ENCODE measurements at regions of chr17 and their contacts with region 1.

Region 1: GRCh38 chr17:59431601-59432000 is 100.1 kb downstream of the YPEL2 start:
- DNase-seq: no peak
- H3K4me3 ChIP-seq: no peak overlapping the region
- H3K27ac ChIP-seq: no peak overlapping the region
- H3K4me1 ChIP-seq: peaks cover 6% of the 10 kb centered on the region
- H3K27me3 ChIP-seq: no peaks in the 10 kb centered on the region
- CTCF ChIP-seq: no peak

Region 2: DNA sequence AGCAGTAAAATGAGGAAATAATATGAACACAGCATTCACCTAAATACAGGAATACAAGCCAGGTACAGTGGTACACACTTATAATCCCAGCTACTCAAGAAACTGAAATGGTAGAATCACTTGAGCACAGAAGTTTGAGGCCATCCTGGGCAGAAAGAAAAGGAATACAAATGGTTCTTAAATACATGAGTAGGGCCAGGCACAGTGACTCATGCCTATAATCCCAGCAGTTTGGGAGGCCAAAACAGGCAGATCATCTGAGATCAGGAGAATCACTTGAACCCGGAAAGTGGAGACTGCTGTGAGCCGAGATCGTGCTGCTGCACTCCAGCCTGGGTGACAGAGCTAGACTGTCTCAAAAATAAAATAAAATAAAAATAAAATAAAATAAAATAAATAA is 244.8 kb before region 1 on chr17:
- CTCF ChIA-PET with region 1: no interaction called
- POLR2A ChIA-PET with region 1: no interaction called
- intact Hi-C with region 1: no loop called
- DNase-seq: no peak
- H3K4me3 ChIP-seq: no peak overlapping the region
- H3K27ac ChIP-seq: no peak overlapping the region
- H3K4me1 ChIP-seq: no peaks in the 10 kb centered on the region
- H3K27me3 ChIP-seq: no peaks in the 10 kb centered on the region
- CTCF ChIP-seq: no peak

Region 3: DNA sequence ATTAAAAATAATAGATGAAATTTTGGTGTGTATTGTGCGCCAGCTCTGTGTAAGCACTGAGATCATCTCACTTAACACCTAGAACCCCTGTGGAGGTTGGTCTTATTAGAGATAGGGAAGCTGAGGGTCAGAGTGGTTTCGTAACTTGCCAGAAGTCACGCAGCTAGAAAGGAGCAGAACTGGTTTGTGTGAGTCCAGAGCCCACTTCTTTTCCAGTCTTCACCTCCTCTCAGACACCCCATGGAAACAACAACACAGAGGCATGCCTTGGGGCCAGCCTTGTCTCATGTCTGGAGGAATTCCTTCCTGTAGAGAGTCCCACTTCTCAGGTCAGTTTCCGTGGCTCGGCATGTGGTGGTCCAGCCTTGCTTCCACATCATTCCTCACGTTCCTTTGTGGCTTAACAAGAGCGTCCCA is 83.6 kb before region 1 on chr17:
- CTCF ChIA-PET with region 1: no interaction called
- POLR2A ChIA-PET with region 1: interaction called, 15 read pairs
- intact Hi-C with region 1: no loop called
- DNase-seq: no peak
- H3K4me3 ChIP-seq: no peak overlapping the region
- H3K27ac ChIP-seq: no peak overlapping the region
- H3K4me1 ChIP-seq: no peaks in the 10 kb centered on the region
- H3K27me3 ChIP-seq: no peaks in the 10 kb centered on the region
- CTCF ChIP-seq: no peak

Measured in A673 (cell line).